GM12878 (cell line): ENCODE measurements at regions of chr9 and their contacts with region 1.

Region 1: DNA sequence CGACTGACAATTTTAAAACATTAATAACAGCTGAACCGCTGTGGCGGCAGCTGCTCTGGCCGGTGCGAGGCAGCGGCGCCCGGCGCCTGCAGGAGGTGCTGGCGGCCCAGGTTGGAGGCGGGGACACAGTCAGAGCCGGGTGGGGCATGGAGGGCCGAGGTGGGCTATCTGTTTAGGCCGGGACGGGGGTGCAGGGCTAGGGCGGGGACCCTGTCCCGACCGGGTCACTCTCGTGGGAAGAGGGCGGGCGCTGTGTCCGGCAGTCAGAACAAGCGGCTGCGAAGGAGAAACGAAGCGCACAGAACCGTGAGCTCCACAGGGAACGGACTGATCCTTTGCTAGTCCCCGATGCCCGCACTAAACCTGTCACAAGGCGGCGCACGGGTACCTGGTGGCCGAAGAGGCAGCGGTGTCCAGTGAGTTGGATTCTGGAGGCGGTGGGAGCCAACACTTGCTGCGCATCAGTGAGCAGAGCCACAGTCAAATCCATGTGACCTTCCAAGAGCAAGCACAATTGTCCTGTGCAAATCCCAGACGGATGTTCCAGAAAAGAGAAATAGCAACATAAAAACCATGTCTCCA is 13.7 kb upstream of the ALDOB start:
- DNase-seq: no peak
- ATAC-seq: peak; percentile 99
- H3K4me3 ChIP-seq: peak overlapping the region; percentile 46; the same call in 1 of the 2 replicates
- H3K27ac ChIP-seq: no peak overlapping the region
- H3K4me1 ChIP-seq: no peaks in the 10 kb centered on the region
- H3K27me3 ChIP-seq: peaks cover 0 to 3% of the 10 kb centered on the region in 2 experiments; a peak in 2 of 4 replicates
- CTCF ChIP-seq: peak; percentile 34 to 54 (median 48); a peak in 4 of 6 replicates
- EP300 ChIP-seq: no peak
- POLR2A ChIP-seq: no peak
- RAD21 ChIP-seq: peak; percentile 40

Region 2: DNA sequence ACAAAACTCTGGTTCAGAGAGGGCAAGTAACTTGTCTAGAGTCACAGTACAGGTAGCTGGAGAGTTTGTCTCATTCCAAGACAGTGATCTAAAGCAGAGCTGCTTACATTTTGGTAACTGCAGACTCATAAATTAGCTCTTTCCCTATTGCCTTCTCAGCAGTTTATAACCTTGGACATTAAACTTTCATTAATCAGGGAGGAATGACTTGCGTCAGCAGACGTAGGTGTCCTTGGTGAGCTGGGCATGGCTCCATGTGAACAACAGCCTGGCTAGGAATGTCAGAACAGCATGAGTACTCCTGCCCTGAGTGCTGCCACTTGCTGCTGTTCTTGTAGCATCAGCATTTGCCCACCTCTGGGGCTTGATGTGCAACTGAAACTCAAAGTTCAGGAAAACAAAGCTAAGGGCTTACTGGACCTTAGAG is 11.4 kb before region 1 on chr9:
- CTCF ChIA-PET with region 1: interaction called, 11 read pairs
- POLR2A ChIA-PET with region 1: no interaction called
- RAD21 ChIA-PET with region 1: no interaction called
- SMC1A ChIA-PET with region 1: interaction called, 5 read pairs
- in situ Hi-C with region 1: no loop called
- intact Hi-C with region 1: no loop called
- DNase-seq: no peak
- ATAC-seq: no peak
- H3K4me3 ChIP-seq: no peak overlapping the region
- H3K27ac ChIP-seq: no peak overlapping the region
- H3K4me1 ChIP-seq: no peaks in the 10 kb centered on the region
- H3K27me3 ChIP-seq: no peaks in the 10 kb centered on the region
- CTCF ChIP-seq: no peak
- EP300 ChIP-seq: no peak
- POLR2A ChIP-seq: no peak
- RAD21 ChIP-seq: no peak